MCF 10A (cell line): ENCODE measurements at regions of chr7 and their contacts with region 1.

Region 1: DNA sequence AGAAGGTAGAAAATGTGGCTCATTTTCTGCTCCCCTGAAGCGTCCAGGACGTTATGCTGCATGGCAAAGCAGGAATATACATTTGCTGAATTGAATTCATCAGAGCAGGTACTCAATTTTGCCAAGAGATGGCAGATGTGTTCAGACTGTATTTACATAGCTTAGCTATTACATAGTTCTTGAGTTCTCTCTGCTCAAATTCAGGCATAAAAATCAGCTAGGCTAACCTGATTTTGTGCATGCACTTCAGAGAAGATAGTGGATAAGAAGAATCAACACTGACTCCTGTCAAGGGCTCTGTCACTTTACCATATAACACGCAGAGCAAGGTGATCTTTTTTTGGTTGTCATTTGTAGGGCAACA is 209.2 kb upstream of the FAM3C start:
- DNase-seq: peak; percentile 28
- H3K4me3 Mint-ChIP-seq: no peak overlapping the region
- H3K27ac Mint-ChIP-seq: no peak overlapping the region
- H3K4me1 Mint-ChIP-seq: peaks cover 13% of the 10 kb centered on the region
- H3K27me3 Mint-ChIP-seq: no peaks in the 10 kb centered on the region
- CTCF ChIP-seq: peak; percentile 33

Region 2: DNA sequence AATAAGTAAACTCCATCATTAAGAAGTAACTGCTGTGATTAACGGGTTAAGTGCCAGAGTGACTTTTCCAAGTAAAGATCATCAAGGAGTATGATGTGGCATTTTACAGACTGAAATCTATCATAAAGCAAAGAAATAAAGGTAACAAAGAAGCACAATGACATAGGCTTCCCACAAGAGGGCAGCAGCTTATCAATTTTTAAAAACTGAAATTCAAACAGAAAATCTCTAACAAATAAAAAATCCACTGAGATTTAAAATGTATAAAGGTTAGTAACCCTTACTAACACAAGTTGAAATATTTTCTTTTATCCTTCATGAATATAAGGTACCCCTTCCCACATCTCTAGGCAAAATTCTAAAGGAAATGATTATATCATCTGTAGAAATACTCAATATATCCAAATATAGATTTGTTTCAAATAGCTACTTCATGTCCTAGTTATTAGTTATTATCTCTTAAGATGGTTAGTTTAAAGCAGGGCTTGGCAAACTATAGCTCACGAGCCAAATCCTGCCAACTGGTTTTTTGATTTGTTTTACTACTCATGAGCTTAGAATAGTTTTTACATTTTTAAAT is 238.4 kb before region 1 on chr7:
- CTCF ChIA-PET with region 1: interaction called, 19 read pairs
- POLR2A ChIA-PET with region 1: no interaction called
- intact Hi-C with region 1: no loop called
- DNase-seq: peak; percentile 37
- H3K4me3 Mint-ChIP-seq: no peak overlapping the region
- H3K27ac Mint-ChIP-seq: peak overlapping the region; percentile 39
- H3K4me1 Mint-ChIP-seq: peaks cover 7% of the 10 kb centered on the region
- H3K27me3 Mint-ChIP-seq: no peaks in the 10 kb centered on the region
- CTCF ChIP-seq: peak; percentile 72

Region 3: DNA sequence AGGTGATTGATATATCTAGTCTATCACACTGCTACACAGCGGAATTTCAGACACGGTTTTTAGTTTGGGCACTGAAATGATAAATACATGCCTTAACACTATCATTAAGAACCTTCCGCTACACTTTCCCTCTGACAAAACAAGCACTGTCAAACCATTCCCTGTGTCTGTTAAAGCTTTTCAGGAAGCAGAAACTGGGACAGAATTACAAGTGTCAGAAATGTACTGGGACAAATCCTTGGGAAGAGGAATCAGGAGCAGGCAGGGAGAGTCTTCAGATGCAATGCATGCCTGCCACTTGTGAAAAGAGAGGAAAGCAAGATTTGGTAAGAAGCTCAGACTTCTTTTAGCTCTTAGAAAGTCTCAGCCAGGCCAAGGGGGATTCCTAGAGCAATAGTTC is 70.9 kb after region 1 on chr7:
- CTCF ChIA-PET with region 1: no interaction called
- POLR2A ChIA-PET with region 1: no interaction called
- intact Hi-C with region 1: no loop called
- DNase-seq: no peak
- H3K4me3 Mint-ChIP-seq: no peak overlapping the region
- H3K27ac Mint-ChIP-seq: no peak overlapping the region
- H3K4me1 Mint-ChIP-seq: no peaks in the 10 kb centered on the region
- H3K27me3 Mint-ChIP-seq: no peaks in the 10 kb centered on the region
- CTCF ChIP-seq: no peak

Region 4: GRCh38 chr7:121744319-121744718 is 139.0 kb after region 1 on chr7:
- CTCF ChIA-PET with region 1: interaction called, 18 read pairs
- POLR2A ChIA-PET with region 1: no interaction called
- intact Hi-C with region 1: loop called (anchors 10 kb)
- DNase-seq: peak; percentile 62
- H3K4me3 Mint-ChIP-seq: no peak overlapping the region
- H3K27ac Mint-ChIP-seq: peak overlapping the region; percentile 53
- H3K4me1 Mint-ChIP-seq: peaks cover 30% of the 10 kb centered on the region
- H3K27me3 Mint-ChIP-seq: no peaks in the 10 kb centered on the region
- CTCF ChIP-seq: no peak

Region 5: GRCh38 chr7:121752706-121753105 is 147.4 kb after region 1 on chr7:
- CTCF ChIA-PET with region 1: interaction called, 18 read pairs
- POLR2A ChIA-PET with region 1: interaction called, 3 read pairs
- intact Hi-C with region 1: loop called (anchors 10 kb)
- DNase-seq: peak; percentile 43
- H3K4me3 Mint-ChIP-seq: no peak overlapping the region
- H3K27ac Mint-ChIP-seq: no peak overlapping the region
- H3K4me1 Mint-ChIP-seq: no peaks in the 10 kb centered on the region
- H3K27me3 Mint-ChIP-seq: no peaks in the 10 kb centered on the region
- CTCF ChIP-seq: peak; percentile 39

Region 6: GRCh38 chr7:121797657-121798452 is 192.6 kb after region 1 on chr7:
- CTCF ChIA-PET with region 1: interaction called, 17 read pairs
- POLR2A ChIA-PET with region 1: interaction called, 3 read pairs
- intact Hi-C with region 1: no loop called
- DNase-seq: peak; percentile 35
- H3K4me3 Mint-ChIP-seq: peak overlapping the region; percentile 55
- H3K27ac Mint-ChIP-seq: peak overlapping the region; percentile 87
- H3K4me1 Mint-ChIP-seq: peaks cover 55% of the 10 kb centered on the region
- H3K27me3 Mint-ChIP-seq: no peaks in the 10 kb centered on the region
- CTCF ChIP-seq: no peak

Region 7: DNA sequence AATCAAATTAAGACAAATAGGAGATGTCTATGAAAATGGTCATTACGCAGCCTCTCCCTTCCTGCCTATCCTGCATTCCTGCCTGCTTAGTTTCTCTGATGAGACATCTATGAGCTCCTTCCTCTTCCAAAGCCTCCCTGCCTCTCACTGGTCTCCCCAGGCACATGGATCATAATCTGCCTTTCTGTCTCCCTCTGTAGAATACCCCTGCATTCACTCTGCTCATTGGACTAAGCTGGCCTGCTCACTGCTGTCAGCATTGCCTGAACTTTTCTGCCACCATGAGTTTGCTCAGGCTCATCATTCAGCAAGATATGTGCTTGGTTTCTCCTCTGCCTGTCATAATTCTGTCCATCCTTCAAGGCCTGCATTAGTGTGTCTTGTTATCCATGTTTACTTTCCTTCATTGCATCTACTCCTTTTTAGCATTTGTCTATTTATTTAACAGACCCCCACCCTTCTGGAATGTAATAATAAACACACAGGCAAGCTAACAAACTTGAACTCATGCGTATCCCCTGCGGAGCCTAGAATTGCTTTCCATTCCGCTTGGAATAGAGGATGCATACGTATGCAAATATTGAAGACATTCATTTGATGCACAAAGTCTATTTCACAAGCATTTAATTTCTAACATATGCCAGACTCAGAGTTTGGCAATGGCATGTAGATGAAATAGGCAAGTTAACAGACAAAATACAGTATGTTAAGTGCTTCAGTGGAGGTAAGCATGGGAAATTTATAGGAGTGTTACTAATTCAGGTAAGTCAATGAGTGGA is 356.0 kb after region 1 on chr7:
- CTCF ChIA-PET with region 1: interaction called, 8 read pairs
- POLR2A ChIA-PET with region 1: no interaction called
- intact Hi-C with region 1: loop called (anchors 1 kb)
- DNase-seq: peak; percentile 82
- H3K4me3 Mint-ChIP-seq: peak overlapping the region; percentile 11
- H3K27ac Mint-ChIP-seq: peak overlapping the region; percentile 83
- H3K4me1 Mint-ChIP-seq: peaks cover 12% of the 10 kb centered on the region
- H3K27me3 Mint-ChIP-seq: no peaks in the 10 kb centered on the region
- CTCF ChIP-seq: peak; percentile 24

Region 8: GRCh38 chr7:122006687-122007086 is 401.4 kb after region 1 on chr7:
- CTCF ChIA-PET with region 1: interaction called, 14 read pairs
- POLR2A ChIA-PET with region 1: no interaction called
- intact Hi-C with region 1: no loop called
- DNase-seq: peak; percentile 20
- H3K4me3 Mint-ChIP-seq: no peak overlapping the region
- H3K27ac Mint-ChIP-seq: no peak overlapping the region
- H3K4me1 Mint-ChIP-seq: peaks cover 11% of the 10 kb centered on the region
- H3K27me3 Mint-ChIP-seq: no peaks in the 10 kb centered on the region
- CTCF ChIP-seq: no peak